Ovary (tissue), 10 donors: ENCODE measurements at regions of chr2 and their contacts with region 1.

Region 1: GRCh38 chr2:197461057-197461456 is 7.7 kb downstream of the COQ10B start:
- DNase-seq: no peak
- H3K4me3 ChIP-seq: no peak overlapping the region
- H3K27ac ChIP-seq: no peak overlapping the region
- H3K4me1 ChIP-seq: no peaks in the 10 kb centered on the region
- H3K27me3 ChIP-seq: no peaks in the 10 kb centered on the region
- CTCF ChIP-seq: no peak
- EP300 ChIP-seq: no peak
- POLR2A ChIP-seq: no peak

Region 2: DNA sequence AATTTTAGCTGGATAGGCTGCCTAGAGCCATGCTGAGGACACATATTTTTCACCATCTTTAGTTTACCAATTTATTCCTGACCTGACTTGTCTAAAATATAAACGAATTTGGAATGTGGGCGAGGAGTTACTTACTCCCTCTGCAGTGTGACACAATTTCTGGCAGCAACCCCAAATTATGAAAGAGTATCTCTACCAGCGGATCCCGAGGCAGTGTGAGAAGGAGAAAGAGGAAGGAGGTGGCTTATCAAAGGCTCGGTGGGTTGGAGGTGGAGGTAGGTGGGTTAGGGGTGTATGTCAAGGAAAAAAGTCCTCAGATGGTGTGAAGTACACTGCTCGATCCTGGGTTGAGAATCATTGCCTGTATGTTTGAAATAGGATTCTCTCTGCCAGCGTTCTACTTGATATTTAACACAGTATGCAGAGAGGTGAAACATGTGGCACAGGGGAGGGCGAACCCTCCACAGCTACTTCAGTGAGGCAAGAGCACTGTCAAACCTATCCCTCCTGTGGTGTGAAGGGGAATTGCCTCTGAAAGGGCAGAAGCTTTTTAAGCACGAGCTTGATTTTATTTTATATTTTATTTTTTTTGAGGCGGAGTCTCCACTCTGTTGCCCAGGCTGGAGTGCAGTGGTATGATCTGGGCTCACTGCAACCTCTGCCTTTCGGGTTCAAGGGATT is 138.4 kb after region 1 on chr2:
- intact Hi-C with region 1: no loop called
- DNase-seq: no peak
- H3K4me3 ChIP-seq: no peak overlapping the region
- H3K27ac ChIP-seq: no peak overlapping the region
- H3K4me1 ChIP-seq: no peaks in the 10 kb centered on the region
- H3K27me3 ChIP-seq: no peaks in the 10 kb centered on the region
- CTCF ChIP-seq: no peak
- EP300 ChIP-seq: no peak
- POLR2A ChIP-seq: no peak

Region 3: GRCh38 chr2:197760293-197760657 is 299.2 kb after region 1 on chr2:
- intact Hi-C with region 1: no loop called
- DNase-seq: no peak
- H3K4me3 ChIP-seq: no peak overlapping the region
- H3K27ac ChIP-seq: no peak overlapping the region
- H3K4me1 ChIP-seq: no peaks in the 10 kb centered on the region
- H3K27me3 ChIP-seq: no peaks in the 10 kb centered on the region
- CTCF ChIP-seq: no peak
- EP300 ChIP-seq: no peak
- POLR2A ChIP-seq: no peak

Region 4: DNA sequence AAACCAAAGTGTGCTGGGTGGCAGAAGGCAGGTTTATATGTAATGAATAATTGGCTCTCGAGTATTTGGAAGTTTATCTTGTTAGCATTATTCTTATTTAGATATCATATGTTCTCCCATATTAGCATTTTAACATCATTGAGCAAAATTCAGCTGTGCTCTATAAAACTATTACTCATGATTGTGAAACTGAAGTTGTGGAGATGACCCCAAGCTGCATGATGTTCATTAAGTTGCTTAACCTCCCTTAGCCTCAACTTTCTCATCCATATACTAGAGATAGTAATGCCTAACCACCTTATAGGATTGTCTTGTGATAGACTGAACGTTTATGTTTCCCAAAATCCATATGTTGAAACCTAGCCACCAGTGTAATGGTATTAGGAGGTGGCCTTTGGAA is 1650.4 kb after region 1 on chr2:
- intact Hi-C with region 1: loop called in 1 of 4 experiments (anchors 5 kb)
- DNase-seq: no peak
- H3K4me3 ChIP-seq: no peak overlapping the region
- H3K27ac ChIP-seq: no peak overlapping the region
- H3K4me1 ChIP-seq: no peaks in the 10 kb centered on the region
- H3K27me3 ChIP-seq: no peaks in the 10 kb centered on the region
- CTCF ChIP-seq: no peak
- EP300 ChIP-seq: no peak
- POLR2A ChIP-seq: no peak